ENCODE measurements at regions of chr2 and their contacts with region 1.

Region 1: DNA sequence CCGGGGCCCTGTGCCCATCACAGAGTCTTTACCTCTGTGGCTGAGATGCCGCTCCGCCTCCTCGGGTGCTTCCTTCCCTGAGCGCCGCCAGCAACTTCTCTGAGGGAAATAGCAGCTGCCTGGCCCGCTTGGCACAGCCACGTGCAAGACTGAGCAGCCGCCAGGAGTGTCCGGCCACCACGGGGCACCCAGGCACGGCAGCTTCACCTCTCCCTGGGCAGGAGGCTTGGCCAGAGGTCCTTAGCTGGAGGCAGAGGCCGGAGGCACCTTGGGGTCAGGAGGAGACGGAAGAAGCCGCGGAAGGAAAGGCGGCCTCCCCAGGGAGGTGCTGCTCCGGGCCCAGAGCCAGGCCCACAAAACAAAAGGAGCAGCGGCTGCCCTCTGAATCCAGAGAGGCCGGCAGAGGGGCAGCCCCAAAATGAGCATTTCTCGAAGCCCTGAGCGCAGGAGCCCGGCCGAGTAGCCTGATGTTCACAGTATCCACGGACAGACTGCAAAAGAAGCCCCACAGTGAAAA is 6.0 kb upstream of the LIMS2 start:
- DNase-seq: no peak
- H3K4me3 ChIP-seq: no peak overlapping the region
- H3K27me3 ChIP-seq: peaks cover 12% of the 10 kb centered on the region
- CTCF ChIP-seq: no peak

Region 2: DNA sequence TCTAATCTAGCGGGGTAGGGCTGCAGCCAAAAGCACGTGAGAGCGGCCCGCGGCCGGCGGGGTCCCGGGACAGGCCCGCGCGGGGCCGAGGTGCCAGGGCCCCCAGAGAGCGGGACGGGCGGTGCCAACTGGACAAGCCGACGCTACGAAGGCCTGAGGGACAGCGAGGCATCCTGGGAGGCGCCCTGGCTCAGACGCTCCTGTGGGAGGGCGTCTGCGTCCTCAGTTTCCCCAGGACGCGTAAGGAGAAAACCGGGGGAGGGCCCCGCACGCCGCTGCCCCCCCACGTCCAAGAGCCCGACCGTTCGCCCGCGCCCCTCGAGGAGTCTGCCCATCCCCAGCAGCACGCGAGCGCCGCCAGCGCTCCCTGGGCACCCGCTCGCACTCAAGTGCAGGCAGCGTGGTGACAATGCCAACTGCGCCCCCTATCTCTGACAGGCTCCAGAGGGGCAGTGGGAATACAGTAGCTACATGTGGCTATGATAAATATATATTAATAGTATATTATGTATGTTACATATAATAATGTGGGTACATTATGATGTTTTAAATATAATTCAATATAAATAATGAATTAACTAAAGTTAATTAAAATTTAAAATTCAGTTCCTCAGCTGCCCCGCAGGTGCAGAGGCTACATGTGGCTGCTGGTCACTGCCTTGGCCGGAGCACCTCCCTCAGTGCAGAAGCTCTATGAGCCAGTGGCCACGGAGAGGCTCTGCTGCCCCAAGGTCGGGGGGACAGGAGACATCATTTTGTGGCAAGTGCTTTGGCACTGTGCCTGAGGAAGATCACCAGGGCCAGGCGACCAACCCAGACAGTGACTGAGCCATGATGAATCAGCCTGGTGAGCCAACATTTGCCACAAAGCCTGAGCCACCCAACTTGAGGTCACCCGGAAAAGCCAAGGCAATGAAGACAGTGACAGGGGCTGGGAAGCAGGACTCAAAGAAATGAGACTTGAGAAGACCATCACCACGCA is 14.4 kb after region 1 on chr2:
- CTCF ChIA-PET with region 1: interaction called, 12 read pairs
- POLR2A ChIA-PET with region 1: no interaction called
- DNase-seq: no peak
- H3K4me3 ChIP-seq: peak overlapping the region; percentile 29
- H3K27me3 ChIP-seq: no peaks in the 10 kb centered on the region
- CTCF ChIP-seq: peak; percentile 65

Region 3: DNA sequence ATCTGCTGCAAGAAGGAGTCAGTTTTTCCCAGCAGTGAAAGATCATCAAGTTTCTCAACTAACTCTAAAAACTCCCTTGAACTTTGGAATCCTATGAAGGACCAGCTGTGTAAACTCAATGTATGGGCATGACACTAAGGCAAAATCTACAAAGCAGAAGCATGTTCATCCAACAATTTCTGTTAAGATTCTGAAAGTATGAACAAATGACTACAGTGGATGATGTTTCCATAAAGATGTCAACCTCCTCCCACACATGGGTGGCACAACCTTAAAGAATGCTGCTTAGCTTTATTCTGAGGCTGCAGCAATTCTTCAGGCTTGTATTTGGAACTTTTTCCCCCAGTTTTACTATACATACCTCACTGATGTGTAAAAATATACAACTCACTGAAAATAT is 82.4 kb after region 1 on chr2:
- CTCF ChIA-PET with region 1: no interaction called
- POLR2A ChIA-PET with region 1: no interaction called
- DNase-seq: no peak
- H3K4me3 ChIP-seq: no peak overlapping the region
- H3K27me3 ChIP-seq: no peaks in the 10 kb centered on the region
- CTCF ChIP-seq: no peak